ENCODE measurements at regions of chr6 and their contacts with region 1.

Region 1: GRCh38 chr6:149211046-149211571 is 106.4 kb upstream of the TAB2 start:
- DNase-seq: peak; percentile 54
- H3K4me3 Mint-ChIP-seq: peak overlapping the region; percentile 53
- H3K27ac Mint-ChIP-seq: no peak overlapping the region
- H3K4me1 Mint-ChIP-seq: peaks cover 22% of the 10 kb centered on the region
- H3K27me3 Mint-ChIP-seq: no peaks in the 10 kb centered on the region

Region 2: GRCh38 chr6:148835920-148836441 is 375.1 kb before region 1 on chr6:
- CTCF ChIA-PET with region 1: no interaction called
- POLR2A ChIA-PET with region 1: no interaction called
- intact Hi-C with region 1: loop called (anchors 10 kb)
- DNase-seq: peak; percentile 71
- H3K4me3 Mint-ChIP-seq: peak overlapping the region; percentile 36
- H3K27ac Mint-ChIP-seq: peak overlapping the region; percentile 79
- H3K4me1 Mint-ChIP-seq: peaks cover 49% of the 10 kb centered on the region
- H3K27me3 Mint-ChIP-seq: peaks cover 5% of the 10 kb centered on the region

Region 3: GRCh38 chr6:149082286-149082707 is 128.8 kb before region 1 on chr6:
- CTCF ChIA-PET with region 1: interaction called, 4 read pairs
- POLR2A ChIA-PET with region 1: interaction called, 11 read pairs
- intact Hi-C with region 1: loop called (anchors 2 kb)
- DNase-seq: peak; percentile 93
- H3K4me3 Mint-ChIP-seq: no peak overlapping the region
- H3K27ac Mint-ChIP-seq: peak overlapping the region; percentile 26
- H3K4me1 Mint-ChIP-seq: peaks cover 79% of the 10 kb centered on the region
- H3K27me3 Mint-ChIP-seq: no peaks in the 10 kb centered on the region

Region 4: DNA sequence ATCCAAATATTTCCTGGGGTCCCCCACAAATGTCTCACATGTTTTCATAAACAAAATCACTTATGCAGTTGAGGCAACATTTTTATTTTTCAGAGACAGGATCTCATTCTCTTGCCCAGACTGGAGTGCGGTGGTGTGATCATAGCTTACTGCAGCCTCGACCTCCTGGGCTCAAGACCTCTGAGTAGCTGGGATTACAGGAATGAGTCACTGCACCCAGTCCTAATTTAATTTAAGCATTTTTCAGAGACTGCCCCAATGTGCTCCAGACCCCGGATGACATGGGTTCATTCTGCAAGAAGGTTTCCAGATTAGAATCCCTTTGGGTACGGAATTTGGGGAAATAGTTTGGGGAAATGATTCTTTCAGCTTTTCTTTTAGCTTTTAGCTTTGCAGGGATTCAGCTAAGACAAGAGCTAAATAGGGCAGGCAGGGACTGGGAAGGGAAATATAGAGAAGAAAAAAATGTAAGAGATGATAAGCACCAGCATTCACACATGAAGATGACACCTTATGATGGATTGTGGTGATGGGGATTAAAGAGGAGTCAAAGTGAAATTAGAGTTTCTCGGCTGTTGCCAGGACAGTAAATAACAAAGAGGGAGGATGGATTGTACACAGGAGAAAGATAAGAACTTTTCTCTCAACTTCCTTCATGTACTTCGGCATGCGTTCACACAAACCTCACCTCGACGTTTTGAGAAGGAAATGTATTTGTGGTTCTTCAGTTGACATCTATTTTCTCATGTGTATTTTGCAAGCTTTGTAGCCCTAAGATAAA is 63.0 kb before region 1 on chr6:
- CTCF ChIA-PET with region 1: no interaction called
- POLR2A ChIA-PET with region 1: interaction called, 5 read pairs
- intact Hi-C with region 1: loop called (anchors 1 kb)
- DNase-seq: peak; percentile 47
- H3K4me3 Mint-ChIP-seq: peak overlapping the region; percentile 45
- H3K27ac Mint-ChIP-seq: peak overlapping the region; percentile 91
- H3K4me1 Mint-ChIP-seq: peaks cover 87% of the 10 kb centered on the region
- H3K27me3 Mint-ChIP-seq: no peaks in the 10 kb centered on the region

Region 5: DNA sequence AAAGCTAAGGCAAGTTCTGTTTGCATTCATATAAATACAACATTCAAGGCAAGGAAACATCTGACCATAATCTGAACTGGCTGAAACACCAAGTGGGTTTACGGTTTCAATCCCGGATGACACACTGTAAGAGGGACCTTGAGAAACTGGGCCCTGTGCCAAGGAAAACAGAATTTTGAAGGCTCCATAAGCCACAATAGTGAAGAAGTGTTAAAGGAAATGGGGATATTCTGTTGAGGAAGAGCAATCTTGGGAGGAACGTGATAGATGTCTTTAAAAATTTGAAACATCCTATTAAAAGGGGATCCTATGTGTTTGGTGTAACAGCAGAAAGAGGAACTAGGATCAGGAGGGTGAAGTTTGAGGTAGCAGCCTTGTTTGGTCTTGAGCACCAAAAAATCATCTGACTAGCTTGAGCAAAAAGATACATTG is 24.0 kb after region 1 on chr6:
- CTCF ChIA-PET with region 1: interaction called, 3 read pairs
- POLR2A ChIA-PET with region 1: interaction called, 4 read pairs
- intact Hi-C with region 1: loop called (anchors 1 kb)
- DNase-seq: no peak
- H3K4me3 Mint-ChIP-seq: no peak overlapping the region
- H3K27ac Mint-ChIP-seq: peak overlapping the region; percentile 91
- H3K4me1 Mint-ChIP-seq: peaks cover 53% of the 10 kb centered on the region
- H3K27me3 Mint-ChIP-seq: no peaks in the 10 kb centered on the region

Region 6: DNA sequence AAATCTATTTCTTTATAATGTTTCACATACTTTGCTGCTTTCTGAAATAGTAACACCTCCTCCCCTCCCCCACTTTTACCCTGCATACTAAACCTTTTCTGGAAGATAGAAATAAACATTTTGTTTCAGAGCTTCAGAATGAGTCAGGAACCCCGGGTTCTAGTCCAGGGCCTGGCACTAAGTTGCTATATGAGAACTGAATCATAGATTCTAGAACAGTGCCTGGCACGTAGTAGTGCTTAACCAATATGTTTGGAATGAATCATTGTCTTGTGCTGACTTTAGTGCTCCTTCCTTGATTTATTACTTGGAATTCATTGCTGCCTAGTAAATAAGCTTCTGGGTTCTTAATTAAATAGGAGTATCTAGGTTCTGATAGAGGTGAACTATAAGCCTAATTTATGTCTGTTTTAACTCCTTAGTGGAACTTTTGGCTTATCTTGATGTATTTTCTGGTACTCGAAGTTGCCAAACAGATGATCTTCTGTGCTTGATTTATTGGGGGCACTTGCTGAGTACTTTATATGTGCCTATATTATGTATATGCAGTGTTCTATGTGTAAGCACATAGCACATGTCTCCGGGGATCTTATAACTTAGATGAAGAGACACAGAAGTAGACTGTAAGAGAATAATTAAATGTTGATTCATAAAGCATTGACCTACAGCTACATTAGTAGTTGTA is 125.0 kb after region 1 on chr6:
- CTCF ChIA-PET with region 1: no interaction called
- POLR2A ChIA-PET with region 1: interaction called, 5 read pairs
- intact Hi-C with region 1: loop called (anchors 2 kb)
- DNase-seq: peak; percentile 75
- H3K4me3 Mint-ChIP-seq: peak overlapping the region; percentile 62
- H3K27ac Mint-ChIP-seq: peak overlapping the region; percentile 95
- H3K4me1 Mint-ChIP-seq: peaks cover 86% of the 10 kb centered on the region
- H3K27me3 Mint-ChIP-seq: no peaks in the 10 kb centered on the region

Measured in activated CD4-positive, alpha-beta memory T cell treated with anti-CD3 and anti-CD28 coated beads for 36 hours (primary cell).